ENCODE measurements at regions of chr1 and their contacts with region 1.

Region 1: DNA sequence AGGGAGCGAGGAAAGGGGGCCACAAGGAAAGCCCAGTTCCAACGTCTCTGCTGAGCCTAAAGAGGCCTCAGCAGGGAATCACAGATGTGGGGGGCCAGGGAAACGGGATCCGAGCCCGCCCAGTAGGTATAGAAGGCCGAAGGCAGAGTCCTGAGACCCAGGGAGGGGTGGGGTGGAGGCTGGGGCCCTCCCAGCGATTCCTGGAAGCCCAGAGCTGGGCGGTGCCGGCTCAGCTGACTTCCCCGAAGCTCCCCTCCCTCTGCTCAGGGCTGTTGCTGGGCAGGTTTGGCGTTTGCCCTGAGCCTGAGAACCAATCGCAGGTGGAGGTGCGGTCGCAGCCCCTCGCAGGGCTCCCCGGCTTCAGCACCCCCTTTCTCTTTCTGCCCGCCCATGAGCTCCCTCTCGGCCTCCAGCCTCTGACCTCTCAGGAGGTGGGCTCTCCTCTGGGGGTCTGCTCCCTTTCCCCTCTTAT is 12.8 kb downstream of the ADAMTSL4 start:
- DNase-seq: peak; percentile 91
- H3K4me3 Mint-ChIP-seq: peak overlapping the region; percentile 98
- H3K27ac Mint-ChIP-seq: peak overlapping the region; percentile 98
- H3K4me1 Mint-ChIP-seq: peaks cover 64% of the 10 kb centered on the region
- H3K27me3 Mint-ChIP-seq: no peaks in the 10 kb centered on the region

Region 2: DNA sequence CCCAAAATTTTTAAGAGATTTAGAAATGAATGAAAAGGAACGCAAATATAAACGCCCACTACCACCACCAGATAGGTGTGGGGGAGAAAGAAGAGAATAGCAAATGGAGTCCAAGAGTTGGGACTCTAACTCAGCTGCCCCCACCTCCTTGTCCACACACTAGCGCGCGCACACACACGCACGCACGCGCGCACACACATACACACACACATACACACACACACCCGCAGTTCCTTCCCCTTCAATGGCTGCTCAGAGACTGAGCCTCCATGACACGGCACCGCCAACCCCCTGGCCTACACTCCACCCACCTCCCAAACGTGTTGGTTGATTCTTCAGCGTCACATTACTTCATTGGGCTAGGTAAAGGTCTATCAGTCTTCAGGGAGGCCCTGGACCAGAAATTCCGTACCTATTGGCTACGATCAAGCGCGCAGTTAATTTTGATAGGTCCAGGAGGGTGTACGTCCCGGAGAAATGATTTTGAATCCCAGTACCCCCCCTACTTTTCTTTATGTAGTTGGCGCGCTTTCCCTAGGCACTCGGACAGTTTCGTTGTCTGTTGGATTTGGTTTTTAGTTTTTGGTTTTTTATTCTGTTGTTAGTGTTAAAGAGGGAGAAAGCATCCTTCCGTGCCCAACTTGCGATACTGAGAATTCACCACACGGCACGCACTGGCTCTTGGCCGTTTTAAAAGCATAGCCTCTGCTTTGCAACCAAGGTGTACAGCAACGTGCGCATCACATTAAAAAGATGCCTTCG is 326.0 kb before region 1 on chr1 and contains the start of gene ANP32E:
- intact Hi-C with region 1: loop called (anchors 2 kb)
- DNase-seq: peak; percentile 93
- H3K4me3 Mint-ChIP-seq: no peak within 1 kb of the TSS
- H3K27ac Mint-ChIP-seq: peak within 1 kb of the TSS; percentile 99
- H3K4me1 Mint-ChIP-seq: peaks cover 19% of the 10 kb centered on the region
- H3K27me3 Mint-ChIP-seq: peaks cover 3% of the 10 kb centered on the region
- total RNA-seq, gene ANP32E: 196 and 217 TPM in 2 replicates

Region 3: DNA sequence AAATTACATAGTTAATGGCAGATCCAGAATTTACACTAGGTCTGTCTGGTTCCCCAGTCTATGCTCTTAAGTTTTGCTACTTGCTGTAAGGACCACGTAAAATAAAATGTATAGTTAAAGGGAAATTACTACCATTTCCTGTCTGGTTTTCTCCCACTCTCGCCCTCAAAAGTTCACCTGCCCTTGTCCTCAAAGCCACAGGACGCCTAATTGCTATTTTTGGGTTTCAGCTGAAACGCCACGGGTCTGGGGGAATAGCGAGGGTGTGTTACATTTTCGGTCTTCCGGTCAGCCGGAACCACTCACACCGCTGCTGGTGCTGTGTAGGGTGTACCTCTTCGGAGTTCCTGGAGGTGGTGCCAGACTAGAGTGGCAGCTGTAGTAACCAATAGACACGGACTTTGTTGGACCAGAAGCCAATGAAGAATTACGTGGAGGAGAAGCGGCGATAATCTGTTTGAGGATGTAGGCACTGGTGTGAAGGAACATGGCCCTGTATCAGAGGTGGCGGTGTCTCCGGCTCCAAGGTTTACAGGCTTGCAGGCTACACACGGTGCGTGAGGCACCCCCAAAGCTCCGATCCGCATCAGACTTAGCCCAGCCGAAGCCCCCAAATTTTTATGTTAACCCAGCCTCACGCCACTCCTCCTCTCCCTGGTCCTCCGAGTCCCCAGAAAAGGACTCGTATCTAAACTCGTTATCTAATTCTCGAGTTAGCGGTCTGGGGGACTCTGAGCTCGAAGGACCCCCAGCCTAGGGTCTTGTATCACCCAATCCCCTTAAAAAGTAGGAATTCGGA is 74.8 kb before region 1 on chr1 and contains the start of gene TARS2:
- intact Hi-C with region 1: loop called (anchors 1 kb)
- DNase-seq: peak; percentile 94
- H3K4me3 Mint-ChIP-seq: peak within 1 kb of the TSS; percentile 98
- H3K27ac Mint-ChIP-seq: peak within 1 kb of the TSS; percentile 95
- H3K4me1 Mint-ChIP-seq: peaks cover 35% of the 10 kb centered on the region
- H3K27me3 Mint-ChIP-seq: no peaks in the 10 kb centered on the region
- total RNA-seq, gene TARS2: 77.3 and 77.4 TPM in 2 replicates

Region 4: GRCh38 chr1:150621497-150622302 is 59.7 kb after region 1 on chr1:
- intact Hi-C with region 1: loop called (anchors 1 kb)
- DNase-seq: peak; percentile 45
- H3K4me3 Mint-ChIP-seq: peak overlapping the region; percentile 56
- H3K27ac Mint-ChIP-seq: peak overlapping the region; percentile 85
- H3K4me1 Mint-ChIP-seq: peaks cover 76% of the 10 kb centered on the region
- H3K27me3 Mint-ChIP-seq: no peaks in the 10 kb centered on the region

Region 5: GRCh38 chr1:150841626-150842025 is 279.6 kb after region 1 on chr1:
- intact Hi-C with region 1: loop called (anchors 10 kb)
- DNase-seq: peak; percentile 18
- H3K4me3 Mint-ChIP-seq: peak overlapping the region; percentile 32
- H3K27ac Mint-ChIP-seq: peak overlapping the region; percentile 49
- H3K4me1 Mint-ChIP-seq: peaks cover 31% of the 10 kb centered on the region
- H3K27me3 Mint-ChIP-seq: no peaks in the 10 kb centered on the region

Region 6: GRCh38 chr1:151008190-151008860 is 446.3 kb after region 1 on chr1 and contains the start of gene PRUNE1:
- intact Hi-C with region 1: loop called (anchors 2 kb)
- DNase-seq: peak; percentile 94
- H3K4me3 Mint-ChIP-seq: peak within 1 kb of the TSS; percentile 100
- H3K27ac Mint-ChIP-seq: peak within 1 kb of the TSS; percentile 96
- H3K4me1 Mint-ChIP-seq: peaks cover 79% of the 10 kb centered on the region
- H3K27me3 Mint-ChIP-seq: no peaks in the 10 kb centered on the region
- total RNA-seq, gene PRUNE1: 15.0 and 15.4 TPM in 2 replicates

Measured in activated T-helper 1 cell treated with anti-CD3 and anti-CD28 coated beads, Interleukin-12 subunit alpha, Interleukin-12 subunit beta, Interleukin-2, Interleukin-4 antibody, amounts not matched to agents 30 ng/mL and 10 ng/mL and 1 ng/mL, durations not matched to agents 14 hours and 24 hours and 36 hours (primary cell).